IMR-90 (cell line): ENCODE measurements at regions of chr14 and their contacts with region 1.

Region 1: GRCh38 chr14:38567703-38568102 is 311.8 kb upstream of the CLEC14A start:
- DNase-seq: no peak
- ATAC-seq: peak; percentile 42; the same call in 1 of the 2 replicates
- H3K4me3 ChIP-seq: no peak overlapping the region
- H3K27ac ChIP-seq: no peak overlapping the region
- H3K4me1 ChIP-seq: no peaks in the 10 kb centered on the region
- H3K27me3 ChIP-seq: no peaks in the 10 kb centered on the region
- CTCF ChIP-seq: no peak
- POLR2A ChIP-seq: no peak
- RAD21 ChIP-seq: no peak

Region 2: GRCh38 chr14:38553586-38553985 is 14.1 kb before region 1 on chr14:
- CTCF ChIA-PET with region 1: no interaction called
- POLR2A ChIA-PET with region 1: interaction called, 4 read pairs
- dilution Hi-C with region 1: no loop called
- in situ Hi-C with region 1: no loop called
- intact Hi-C with region 1: loop called (anchors 1 kb)
- DNase-seq: peak; percentile 89
- ATAC-seq: peak; percentile 94
- H3K4me3 ChIP-seq: no peak overlapping the region
- H3K27ac ChIP-seq: no peak overlapping the region
- H3K4me1 ChIP-seq: no peaks in the 10 kb centered on the region
- H3K27me3 ChIP-seq: no peaks in the 10 kb centered on the region
- CTCF ChIP-seq: no peak
- POLR2A ChIP-seq: no peak
- RAD21 ChIP-seq: no peak

Region 3: GRCh38 chr14:38611928-38612327 is 44.2 kb after region 1 on chr14:
- CTCF ChIA-PET with region 1: no interaction called
- POLR2A ChIA-PET with region 1: no interaction called
- dilution Hi-C with region 1: no loop called
- in situ Hi-C with region 1: no loop called
- intact Hi-C with region 1: no loop called
- DNase-seq: no peak
- ATAC-seq: no peak
- H3K4me3 ChIP-seq: no peak overlapping the region
- H3K27ac ChIP-seq: no peak overlapping the region
- H3K4me1 ChIP-seq: no peaks in the 10 kb centered on the region
- H3K27me3 ChIP-seq: no peaks in the 10 kb centered on the region; the same call in 1 of the 2 replicates
- CTCF ChIP-seq: no peak
- POLR2A ChIP-seq: no peak
- RAD21 ChIP-seq: no peak